Naive thymus-derived CD8-positive, alpha-beta T cell (primary cell): ENCODE measurements at regions of chr6 and their contacts with region 1.

Region 1: DNA sequence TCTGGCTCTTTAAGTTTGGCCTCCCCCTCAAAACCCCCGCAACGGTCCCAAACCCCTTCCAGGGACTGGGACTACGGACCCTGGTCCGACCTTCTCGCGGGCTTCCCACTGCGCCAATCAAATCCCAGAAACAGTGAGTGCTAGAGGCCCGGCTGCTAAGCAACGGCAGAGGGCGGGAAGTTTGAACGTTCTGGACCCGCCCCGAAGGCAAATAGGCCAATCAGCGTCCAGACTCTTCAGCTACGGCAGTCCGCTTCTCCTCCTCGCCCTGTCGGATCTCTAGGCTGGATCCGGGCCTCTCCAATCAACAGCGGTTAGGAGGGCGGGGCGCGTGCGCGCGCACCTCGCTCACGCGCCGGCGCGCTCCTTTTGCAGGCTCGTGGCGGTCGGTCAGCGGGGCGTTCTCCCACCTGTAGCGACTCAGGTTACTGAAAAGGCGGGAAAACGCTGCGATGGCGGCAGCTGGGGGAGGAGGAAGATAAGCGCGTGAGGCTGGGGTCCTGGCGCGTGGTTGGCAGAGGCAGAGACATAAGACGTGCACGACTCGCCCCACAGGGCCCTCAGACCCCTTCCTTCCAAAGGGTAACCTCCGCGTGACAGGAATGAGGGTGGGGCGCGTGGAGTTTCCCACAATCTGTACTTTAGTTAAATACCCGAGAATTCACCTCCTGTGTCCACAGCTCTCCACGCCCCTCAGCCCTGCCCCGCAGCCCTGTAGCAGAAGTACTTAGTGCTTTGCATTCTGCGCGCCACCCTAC is at the start of gene MSH5:
- DNase-seq: peak; percentile 86 to 97 (median 93)
- ATAC-seq: peak; percentile 91 to 94
- H3K4me3 Mint-ChIP-seq: peak within 1 kb of the TSS; percentile 92 to 99 (median 98)
- H3K27ac Mint-ChIP-seq: peak within 1 kb of the TSS; percentile 71 to 97 (median 91)
- H3K4me1 Mint-ChIP-seq: peaks cover 49 to 62% (median 58%) of the 10 kb centered on the region in 4 donors
- H3K27me3 Mint-ChIP-seq: no peaks in the 10 kb centered on the region
- polyA plus RNA-seq, gene MSH5: 0.61 to 1.1 (median 1.1) TPM

Region 2: GRCh38 chr6:31729515-31729978 is 10.3 kb before region 1 on chr6:
- POLR2A ChIA-PET with region 1: interaction called, 24 read pairs
- DNase-seq: peak; percentile 61 to 88 (median 77)
- ATAC-seq: peak; percentile 73 to 81
- H3K4me3 Mint-ChIP-seq: peak overlapping the region; percentile 94 to 98 (median 97)
- H3K27ac Mint-ChIP-seq: peak overlapping the region; percentile 65 to 94 (median 88)
- H3K4me1 Mint-ChIP-seq: peaks cover 22 to 69% (median 64%) of the 10 kb centered on the region in 4 donors
- H3K27me3 Mint-ChIP-seq: no peaks in the 10 kb centered on the region

Region 3: DNA sequence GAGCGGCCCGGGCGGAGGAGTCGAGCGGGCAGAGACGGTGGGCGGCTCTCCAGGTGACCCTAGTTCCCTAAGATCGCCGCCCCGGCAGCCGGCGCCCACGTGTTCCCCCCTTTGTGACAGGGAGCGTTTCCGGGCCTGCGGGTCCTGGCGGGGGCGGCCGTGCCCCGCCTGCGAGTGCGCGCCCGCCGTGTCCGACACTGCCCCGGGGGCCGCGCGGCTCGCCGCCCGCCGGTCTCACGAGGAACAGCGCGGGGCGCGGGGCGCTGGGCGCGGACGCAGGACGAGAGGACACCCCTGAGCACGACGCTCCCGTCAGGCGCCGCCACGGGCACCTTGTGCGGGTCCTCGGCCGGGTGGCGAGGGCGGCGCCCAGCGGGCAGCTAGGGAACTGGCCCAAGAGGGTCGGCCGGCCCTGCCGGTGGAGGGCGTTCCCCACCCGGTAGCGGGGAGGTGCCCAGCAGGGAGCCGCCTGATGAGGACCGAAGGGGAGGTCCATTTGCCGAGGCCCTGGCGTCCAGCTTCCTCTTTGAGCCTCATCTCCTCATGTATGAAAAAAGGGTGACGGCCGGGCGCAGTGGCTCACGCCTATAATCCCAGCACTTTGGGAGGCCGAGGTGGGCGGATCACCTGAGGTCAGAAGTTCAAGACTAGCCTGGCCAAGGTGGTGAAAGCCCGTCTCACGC is 55.9 kb after region 1 on chr6 and contains the start of gene VARS1:
- POLR2A ChIA-PET with region 1: interaction called, 10 read pairs
- DNase-seq: peak; percentile 63 to 91 (median 84)
- ATAC-seq: peak; percentile 86 to 87
- H3K4me3 Mint-ChIP-seq: peak within 1 kb of the TSS; percentile 88 to 97 (median 94)
- H3K27ac Mint-ChIP-seq: peak within 1 kb of the TSS; percentile 96 to 99 (median 98)
- H3K4me1 Mint-ChIP-seq: peaks cover 19 to 47% (median 46%) of the 10 kb centered on the region in 4 donors
- H3K27me3 Mint-ChIP-seq: no peaks in the 10 kb centered on the region
- polyA plus RNA-seq, gene VARS1: 27.5 to 37.8 (median 30.3) TPM